ENCODE measurements at regions of chr2 and their contacts with region 1.

Region 1: GRCh38 chr2:172102391-172103278 is at the start of gene DLX2:
- DNase-seq: peak; percentile 54 to 56
- ATAC-seq: peak; percentile 42 to 53
- H3K4me3 ChIP-seq: peak within 1 kb of the TSS; percentile 45 to 68 (median 52)
- H3K27ac ChIP-seq: no peak within 1 kb of the TSS
- H3K4me1 ChIP-seq: peaks cover 17 to 43% of the 10 kb centered on the region in 2 donors
- H3K27me3 ChIP-seq: peaks cover 98 to 100% (median 100%) of the 10 kb centered on the region in 3 donors
- CTCF ChIP-seq: no peak
- POLR2A ChIP-seq: no peak
- total RNA-seq, gene DLX2: not detected

Region 2: DNA sequence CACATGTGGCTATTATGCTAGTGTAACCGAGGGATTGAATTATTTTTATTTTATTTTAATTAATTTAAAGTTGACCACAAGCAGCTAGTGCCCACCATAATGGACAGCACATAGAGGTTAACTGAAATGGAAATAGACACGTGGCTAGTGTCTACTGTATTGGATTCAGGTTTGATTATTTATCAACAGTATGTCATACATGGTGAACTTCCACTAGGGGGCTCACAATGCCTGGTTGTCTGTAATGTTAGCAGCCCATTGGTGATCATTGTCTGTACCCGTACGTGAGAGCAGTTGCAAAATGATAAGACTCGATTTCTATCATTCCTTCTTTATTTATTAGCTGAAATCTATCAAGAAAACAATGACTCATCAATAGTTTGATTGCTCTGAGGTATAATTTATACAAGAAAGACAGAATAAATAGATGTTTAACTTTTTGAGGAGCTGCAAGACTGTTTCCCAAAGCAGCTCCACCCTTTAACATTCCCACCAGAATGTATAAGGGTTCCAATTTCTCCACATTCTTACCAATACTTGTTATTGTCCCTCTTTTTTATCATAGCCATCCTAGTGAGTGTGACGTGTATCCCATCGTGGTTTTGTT is 503.8 kb before region 1 on chr2:
- in situ Hi-C with region 1: loop called in 3 of 4 experiments (anchors 10 to 25 kb)
- intact Hi-C with region 1: loop called (anchors 5 kb)
- DNase-seq: peak in 1 of 2 donors; percentile 4
- ATAC-seq: peak; percentile 45 to 60
- H3K4me3 ChIP-seq: no peak overlapping the region
- H3K27ac ChIP-seq: no peak overlapping the region
- H3K4me1 ChIP-seq: no peaks in the 10 kb centered on the region
- H3K27me3 ChIP-seq: no peaks in the 10 kb centered on the region
- CTCF ChIP-seq: peak; percentile 43 to 68 (median 46)
- POLR2A ChIP-seq: no peak

Region 3: GRCh38 chr2:171687287-171688128 is 415.1 kb before region 1 on chr2 and contains the start of gene DYNC1I2:
- in situ Hi-C with region 1: no loop called
- intact Hi-C with region 1: loop called (anchors 5 kb)
- DNase-seq: peak; percentile 87 to 89
- ATAC-seq: peak; percentile 99 to 100
- H3K4me3 ChIP-seq: peak within 1 kb of the TSS; percentile 85 to 95 (median 92)
- H3K27ac ChIP-seq: peak within 1 kb of the TSS; percentile 81 to 93 (median 88)
- H3K4me1 ChIP-seq: peaks cover 13 to 16% of the 10 kb centered on the region in 2 donors
- H3K27me3 ChIP-seq: no peaks in the 10 kb centered on the region
- CTCF ChIP-seq: peak in 1 of 5 experiments; percentile 41
- POLR2A ChIP-seq: peak; percentile 17 to 26
- total RNA-seq, gene DYNC1I2: 40.0 to 93.7 (median 59.3) TPM

Region 4: GRCh38 chr2:171703574-171704347 is 398.9 kb before region 1 on chr2:
- in situ Hi-C with region 1: loop called in 3 of 4 experiments (anchors 10 to 25 kb)
- intact Hi-C with region 1: loop called (anchors 5 kb)
- DNase-seq: no peak
- ATAC-seq: peak in 1 of 2 donors; percentile 65
- H3K4me3 ChIP-seq: no peak overlapping the region
- H3K27ac ChIP-seq: no peak overlapping the region
- H3K4me1 ChIP-seq: peaks cover 16 to 18% of the 10 kb centered on the region in 2 donors
- H3K27me3 ChIP-seq: no peaks in the 10 kb centered on the region
- CTCF ChIP-seq: peak in 4 of 5 experiments; percentile 10 to 49 (median 28)
- POLR2A ChIP-seq: no peak

Region 5: GRCh38 chr2:171811245-171811628 is 291.4 kb before region 1 on chr2:
- in situ Hi-C with region 1: loop called (anchors 25 kb)
- intact Hi-C with region 1: loop called (anchors 1 kb)
- DNase-seq: no peak
- ATAC-seq: peak; percentile 53 to 56
- H3K4me3 ChIP-seq: no peak overlapping the region
- H3K27ac ChIP-seq: peak overlapping the region in 2 of 4 donors; percentile 1 to 31
- H3K4me1 ChIP-seq: peaks cover 0 to 35% of the 10 kb centered on the region in 2 donors
- H3K27me3 ChIP-seq: no peaks in the 10 kb centered on the region
- CTCF ChIP-seq: peak in 4 of 5 experiments; percentile 21 to 40 (median 28)
- POLR2A ChIP-seq: no peak

Region 6: DNA sequence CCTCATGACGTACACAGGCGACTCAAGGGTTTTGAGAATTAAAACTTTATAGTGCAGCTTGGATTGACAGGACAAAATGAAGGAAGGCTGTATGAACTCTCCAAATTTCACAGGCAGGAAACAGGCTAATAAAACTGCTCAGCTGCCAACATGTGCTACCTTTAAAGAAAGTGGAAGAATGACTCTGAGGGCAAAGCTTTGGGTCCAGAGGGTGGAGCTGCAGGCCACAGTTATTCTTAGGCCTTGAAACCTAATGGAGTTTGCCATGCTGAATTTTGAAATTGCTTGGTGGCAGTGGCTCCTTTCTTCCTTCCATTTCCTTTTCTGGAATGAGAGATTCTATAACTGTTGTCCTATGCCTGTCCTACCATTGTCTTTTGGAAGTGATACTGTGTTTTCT is 145.6 kb before region 1 on chr2:
- in situ Hi-C with region 1: no loop called
- intact Hi-C with region 1: loop called (anchors 10 kb)
- DNase-seq: no peak
- ATAC-seq: no peak
- H3K4me3 ChIP-seq: no peak overlapping the region
- H3K27ac ChIP-seq: peak overlapping the region in 2 of 4 donors; percentile 12 to 44
- H3K4me1 ChIP-seq: peaks cover 47 to 62% of the 10 kb centered on the region in 2 donors
- H3K27me3 ChIP-seq: no peaks in the 10 kb centered on the region
- CTCF ChIP-seq: no peak
- POLR2A ChIP-seq: no peak

Region 7: DNA sequence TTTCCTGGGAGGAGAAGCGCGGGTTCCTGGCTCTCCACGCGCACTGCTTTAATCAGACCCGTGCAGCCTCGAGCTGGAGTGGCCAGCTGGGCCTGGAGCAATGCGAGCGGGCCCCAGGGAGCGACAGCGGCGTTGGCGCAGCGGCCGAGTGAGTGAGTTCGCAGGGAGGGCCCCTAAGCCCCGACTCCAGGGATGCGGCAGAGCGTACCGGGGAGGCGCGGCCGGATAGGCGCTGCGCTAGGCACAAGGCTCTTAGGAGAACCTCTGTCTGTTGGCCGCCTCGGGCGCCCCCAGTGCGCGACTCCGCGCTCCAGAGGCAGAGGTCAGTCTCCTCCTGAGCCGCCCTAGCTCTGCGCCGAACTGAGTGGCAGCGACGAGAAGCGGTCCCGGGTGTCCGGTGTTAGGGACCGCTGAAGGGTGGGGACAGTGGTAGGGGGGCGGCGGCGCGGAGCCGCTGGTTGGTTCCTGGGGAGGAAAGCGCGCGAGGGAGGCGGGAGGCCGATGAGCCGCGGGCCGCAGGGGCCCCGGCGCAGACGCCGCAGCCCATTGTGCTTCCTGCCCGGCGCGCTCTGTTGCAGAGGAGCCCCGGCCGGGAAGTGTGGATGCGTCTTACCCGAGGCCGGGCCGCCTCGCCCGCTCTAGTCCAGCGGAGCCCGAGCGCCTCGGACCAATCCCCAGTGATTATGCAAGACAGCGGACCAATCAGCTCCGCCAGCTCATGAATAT is 17.7 kb before region 1 on chr2:
- in situ Hi-C with region 1: no loop called
- intact Hi-C with region 1: loop called (anchors 2 kb)
- DNase-seq: peak; percentile 50 to 68
- ATAC-seq: peak; percentile 79 to 88
- H3K4me3 ChIP-seq: peak overlapping the region; percentile 46 to 54 (median 53)
- H3K27ac ChIP-seq: no peak overlapping the region
- H3K4me1 ChIP-seq: peaks cover 40 to 43% of the 10 kb centered on the region in 2 donors
- H3K27me3 ChIP-seq: peaks cover 96 to 99% (median 98%) of the 10 kb centered on the region in 3 donors
- CTCF ChIP-seq: no peak
- POLR2A ChIP-seq: peak; percentile 12 to 19

Region 8: DNA sequence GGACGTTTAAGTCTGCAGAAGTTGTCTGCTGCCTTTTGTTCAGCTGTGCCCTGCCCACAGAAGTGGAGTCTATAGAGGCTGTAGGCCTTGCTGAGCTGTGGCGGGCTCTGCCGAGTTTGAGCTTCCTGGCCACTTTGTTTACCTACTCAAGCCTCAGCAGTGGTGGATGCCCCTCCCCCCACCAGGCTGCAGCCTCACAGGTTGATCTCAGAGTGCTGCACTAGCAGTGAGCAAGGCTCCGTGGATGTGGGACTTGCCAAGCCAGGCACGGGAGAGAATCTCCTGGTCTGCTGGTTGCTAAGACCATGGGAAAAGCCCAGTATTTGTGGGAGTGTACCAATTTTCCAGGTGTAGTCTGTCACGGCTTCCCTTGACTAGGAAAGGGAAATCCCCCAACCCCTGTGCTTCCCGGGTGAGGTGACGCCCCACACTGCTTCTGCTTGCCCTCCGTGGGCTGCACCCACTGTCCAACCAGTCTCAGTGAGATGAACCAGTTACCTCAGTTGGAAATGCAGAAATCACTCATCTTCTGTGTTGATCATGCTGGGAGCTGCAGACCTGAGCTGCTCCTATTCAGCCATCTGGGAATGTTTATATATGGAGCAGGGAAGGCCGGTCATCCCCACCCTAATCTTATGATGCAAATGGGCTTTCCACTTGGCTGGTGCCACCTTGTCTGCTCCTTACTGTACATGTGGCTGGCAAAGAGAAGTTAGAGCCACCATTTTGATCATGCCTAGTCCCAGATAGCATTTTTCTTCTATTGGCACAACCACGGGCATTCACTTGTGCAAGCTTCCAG is 167.8 kb after region 1 on chr2:
- in situ Hi-C with region 1: no loop called
- intact Hi-C with region 1: no loop called
- DNase-seq: no peak
- ATAC-seq: no peak
- H3K4me3 ChIP-seq: no peak overlapping the region
- H3K27ac ChIP-seq: no peak overlapping the region
- H3K4me1 ChIP-seq: no peaks in the 10 kb centered on the region
- H3K27me3 ChIP-seq: no peaks in the 10 kb centered on the region
- CTCF ChIP-seq: no peak
- POLR2A ChIP-seq: no peak

Region 9: GRCh38 chr2:172323256-172323655 is 220.6 kb after region 1 on chr2:
- in situ Hi-C with region 1: no loop called
- intact Hi-C with region 1: no loop called
- DNase-seq: no peak
- ATAC-seq: no peak
- H3K4me3 ChIP-seq: no peak overlapping the region
- H3K27ac ChIP-seq: no peak overlapping the region
- H3K4me1 ChIP-seq: no peaks in the 10 kb centered on the region
- H3K27me3 ChIP-seq: no peaks in the 10 kb centered on the region
- CTCF ChIP-seq: no peak
- POLR2A ChIP-seq: no peak